ENCODE measurements at regions of chr1 and their contacts with region 1.

Region 1: DNA sequence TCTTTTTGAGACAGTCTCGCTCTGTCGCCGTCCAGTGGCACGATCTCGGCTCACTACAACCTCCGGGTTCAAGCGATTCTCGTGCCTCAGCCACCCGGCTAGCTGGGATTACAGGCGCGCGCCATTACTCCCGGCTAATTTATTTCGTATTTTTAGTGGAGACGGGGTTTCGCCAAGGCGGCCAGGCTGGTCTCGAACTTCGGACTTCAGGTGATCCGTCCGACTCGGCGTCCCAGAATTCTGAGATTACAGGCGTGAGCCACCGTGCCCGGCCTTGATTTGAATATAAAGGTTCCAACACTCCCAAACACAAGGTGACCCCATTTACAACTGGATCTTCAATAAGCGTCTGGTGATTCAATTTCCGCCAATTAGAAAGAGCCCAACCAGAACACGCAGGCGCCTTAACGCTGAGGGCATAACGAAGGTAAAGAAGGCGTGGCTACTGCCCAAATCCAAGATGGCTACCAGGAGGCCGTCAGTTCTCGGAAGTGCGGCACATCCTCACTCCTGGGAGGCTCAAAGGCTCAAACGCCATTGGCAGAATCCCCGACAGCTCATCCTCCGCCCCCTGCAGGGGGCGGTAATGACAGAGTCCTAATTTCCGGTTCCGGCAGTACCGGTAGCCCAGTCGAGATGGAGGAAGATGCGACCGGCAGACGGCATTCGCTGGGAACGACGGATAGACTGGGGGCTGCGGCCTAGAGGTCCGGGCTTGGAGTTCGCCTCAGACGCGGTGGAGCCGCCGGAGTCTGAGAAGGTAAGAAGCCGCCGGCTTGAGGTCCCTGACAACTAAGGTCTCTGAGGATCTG is at the start of gene SLC25A44:
- DNase-seq: peak; percentile 94 to 98 (median 97)
- ATAC-seq: peak; percentile 99
- H3K4me3 ChIP-seq: peak within 1 kb of the TSS; percentile 92
- H3K4me3 Mint-ChIP-seq: peak within 1 kb of the TSS; percentile 83 to 99 (median 97)
- H3K27ac ChIP-seq: peak within 1 kb of the TSS; percentile 86
- H3K27ac Mint-ChIP-seq: peak within 1 kb of the TSS; percentile 85 to 97 (median 93)
- H3K4me1 ChIP-seq: peaks cover 12 to 31% of the 10 kb centered on the region in 2 donors
- H3K4me1 Mint-ChIP-seq: peaks cover 22 to 53% (median 45%) of the 10 kb centered on the region in 7 donors
- H3K27me3 ChIP-seq: no peaks in the 10 kb centered on the region
- H3K27me3 Mint-ChIP-seq: no peaks in the 10 kb centered on the region
- total RNA-seq, gene SLC25A44: 17.8 to 38.4 (median 19.6) TPM

Region 2: DNA sequence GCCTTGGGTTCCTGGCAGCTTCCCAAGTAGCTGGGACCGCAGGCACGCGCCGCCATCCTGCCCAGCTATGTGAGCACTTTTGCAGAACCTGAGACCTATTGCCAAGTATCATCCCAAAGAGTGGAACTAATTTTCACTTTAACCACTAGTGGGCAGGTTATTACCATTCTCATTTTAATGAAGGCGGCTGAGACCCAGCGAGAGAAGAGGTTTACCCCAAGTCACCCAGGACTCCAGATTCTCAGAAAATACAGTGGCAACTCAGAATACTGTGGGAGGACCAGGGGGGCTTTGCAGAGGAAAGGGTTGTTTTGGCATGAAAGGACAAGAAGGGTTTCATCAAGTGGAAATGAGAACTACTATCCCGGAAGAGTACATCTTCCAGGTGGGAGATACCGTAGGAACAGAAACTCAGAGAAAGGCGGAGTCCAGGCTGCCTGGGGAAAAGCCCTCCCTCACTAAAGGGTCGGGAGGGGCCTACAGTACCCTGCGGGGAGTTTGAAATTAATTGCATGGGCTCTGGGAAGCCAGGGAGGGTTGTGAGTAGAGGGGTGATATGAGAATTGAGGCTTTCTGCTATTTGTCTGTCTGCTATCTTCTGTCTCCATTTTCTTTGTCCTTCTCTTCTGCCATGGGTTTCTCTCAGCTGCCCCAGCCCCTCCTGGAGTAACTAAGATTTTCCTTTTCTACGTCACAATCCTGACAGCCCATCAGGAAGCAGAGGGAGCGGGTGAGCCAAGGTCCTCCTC is 47.5 kb before region 1 on chr1:
- CTCF ChIA-PET with region 1: interaction called, 3 read pairs
- POLR2A ChIA-PET with region 1: no interaction called
- intact Hi-C with region 1: loop called in 1 of 2 experiments (anchors 2 kb)
- DNase-seq: peak in 7 of 9 donors; percentile 54 to 78 (median 71)
- ATAC-seq: peak; percentile 63
- H3K4me3 ChIP-seq: no peak overlapping the region
- H3K4me3 Mint-ChIP-seq: peak overlapping the region; percentile 34 to 79 (median 63)
- H3K27ac ChIP-seq: no peak overlapping the region
- H3K27ac Mint-ChIP-seq: peak overlapping the region in 7 of 9 donors; percentile 9 to 84 (median 63)
- H3K4me1 ChIP-seq: peaks cover 0 to 6% of the 10 kb centered on the region in 2 donors
- H3K4me1 Mint-ChIP-seq: peaks cover 6 to 28% (median 15%) of the 10 kb centered on the region in 7 donors
- H3K27me3 ChIP-seq: no peaks in the 10 kb centered on the region
- H3K27me3 Mint-ChIP-seq: peaks cover 0 to 8% (median 0%) of the 10 kb centered on the region in 5 donors

Region 3: DNA sequence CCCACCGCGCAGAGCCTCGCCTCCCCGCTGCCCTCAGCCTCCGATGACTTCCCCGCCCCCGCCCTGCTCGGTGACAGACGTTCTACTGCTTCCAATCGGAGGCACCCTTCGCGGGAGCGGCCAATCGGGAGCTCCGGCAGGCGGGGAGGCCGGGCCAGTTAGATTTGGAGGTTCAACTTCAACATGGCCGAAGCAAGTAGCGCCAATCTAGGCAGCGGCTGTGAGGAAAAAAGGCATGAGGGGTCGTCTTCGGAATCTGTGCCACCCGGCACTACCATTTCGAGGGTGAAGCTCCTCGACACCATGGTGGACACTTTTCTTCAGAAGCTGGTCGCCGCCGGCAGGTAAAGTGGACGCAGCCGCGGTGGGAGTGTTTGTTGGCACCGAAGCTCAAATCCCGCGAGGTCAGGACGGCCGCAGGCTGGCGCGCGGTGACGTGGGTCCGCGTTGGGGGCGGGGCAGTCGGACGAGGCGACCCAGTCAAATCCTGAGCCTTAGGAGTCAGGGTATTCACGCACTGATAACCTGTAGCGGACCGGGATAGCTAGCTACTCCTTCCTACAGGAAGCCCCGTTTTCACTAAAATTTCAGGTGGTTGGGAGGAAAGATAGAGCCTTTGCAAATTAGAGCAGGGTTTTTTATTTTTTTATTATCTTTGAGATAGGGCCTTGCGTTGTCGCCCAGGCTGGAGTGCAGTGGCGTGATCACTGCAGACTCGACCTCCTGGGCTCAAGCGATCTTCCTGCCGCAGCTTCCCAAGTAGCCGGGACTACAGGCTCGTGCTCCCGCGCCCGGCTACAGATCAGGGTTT is 19.3 kb after region 1 on chr1 and contains the start of gene PMF1:
- CTCF ChIA-PET with region 1: interaction called, 3 read pairs
- POLR2A ChIA-PET with region 1: interaction called, 30 read pairs
- intact Hi-C with region 1: loop called (anchors 1 kb)
- DNase-seq: peak; percentile 83 to 97 (median 95)
- ATAC-seq: peak; percentile 98
- H3K4me3 ChIP-seq: peak within 1 kb of the TSS; percentile 85
- H3K4me3 Mint-ChIP-seq: peak within 1 kb of the TSS; percentile 90 to 99 (median 96)
- H3K27ac ChIP-seq: peak within 1 kb of the TSS; percentile 94
- H3K27ac Mint-ChIP-seq: peak within 1 kb of the TSS; percentile 98 to 100 (median 99)
- H3K4me1 ChIP-seq: peaks cover 8 to 17% of the 10 kb centered on the region in 2 donors
- H3K4me1 Mint-ChIP-seq: peaks cover 20 to 58% (median 41%) of the 10 kb centered on the region in 7 donors
- H3K27me3 ChIP-seq: no peaks in the 10 kb centered on the region
- H3K27me3 Mint-ChIP-seq: no peaks in the 10 kb centered on the region
- total RNA-seq, gene PMF1: 42.2 to 76.1 (median 58.2) TPM

Region 4: DNA sequence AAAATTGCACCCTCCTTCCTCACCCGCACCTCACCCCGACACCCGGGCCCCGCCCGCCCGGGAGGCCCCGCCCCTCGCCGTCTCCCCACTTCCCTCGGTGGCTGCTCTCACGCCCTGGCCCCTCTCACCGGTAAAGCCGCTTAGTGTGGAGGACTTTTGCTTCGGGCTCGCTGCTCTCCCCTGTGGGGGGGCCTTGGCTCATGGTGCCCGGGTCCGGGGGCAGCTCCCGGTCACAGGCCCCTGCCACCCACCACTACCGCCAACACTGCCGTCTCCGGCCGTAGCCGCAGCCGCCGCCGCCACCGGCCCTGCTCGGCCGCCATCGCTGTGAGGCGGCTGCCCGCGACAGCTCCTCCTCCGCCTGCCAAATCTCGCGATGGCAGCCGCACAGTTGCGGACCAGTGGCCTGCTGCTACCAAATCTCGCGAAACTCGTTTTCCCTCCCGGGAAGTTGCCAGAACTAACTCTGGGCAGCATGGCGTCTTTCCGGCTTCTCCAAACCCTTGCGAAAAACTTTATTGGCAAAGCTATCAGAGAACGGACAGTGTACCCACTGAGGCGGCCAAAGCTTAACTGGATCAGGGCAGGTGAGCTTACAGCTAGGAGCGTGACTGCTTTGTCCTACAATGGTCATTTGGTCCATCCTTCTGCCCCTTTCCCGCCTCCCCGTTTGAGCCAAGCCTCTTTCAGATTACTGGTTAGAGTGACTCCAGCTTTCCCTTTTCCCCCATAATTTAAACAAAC is 89.0 kb after region 1 on chr1 and contains the start of gene SMG5:
- CTCF ChIA-PET with region 1: no interaction called
- POLR2A ChIA-PET with region 1: interaction called, 6 read pairs
- intact Hi-C with region 1: loop called (anchors 1 kb)
- DNase-seq: peak; percentile 89 to 98 (median 96)
- ATAC-seq: peak; percentile 95
- H3K4me3 ChIP-seq: peak within 1 kb of the TSS; percentile 93
- H3K4me3 Mint-ChIP-seq: peak within 1 kb of the TSS; percentile 85 to 99 (median 94)
- H3K27ac ChIP-seq: peak within 1 kb of the TSS; percentile 89
- H3K27ac Mint-ChIP-seq: peak within 1 kb of the TSS; percentile 89 to 98 (median 95)
- H3K4me1 ChIP-seq: peaks cover 15 to 22% of the 10 kb centered on the region in 2 donors
- H3K4me1 Mint-ChIP-seq: peaks cover 29 to 51% (median 39%) of the 10 kb centered on the region in 7 donors
- H3K27me3 ChIP-seq: no peaks in the 10 kb centered on the region
- H3K27me3 Mint-ChIP-seq: peaks cover 0 to 3% (median 0%) of the 10 kb centered on the region in 5 donors
- total RNA-seq, gene SMG5: 65.7 to 74.0 (median 69.4) TPM